K562 (cell line): ENCODE measurements at regions of chr7 and their contacts with region 1.

Region 1: GRCh38 chr7:92447345-92448204 is at the start of gene GATAD1:
- DNase-seq: peak; percentile 96 to 98 (median 97)
- ATAC-seq: peak; percentile 95
- H3K4me3 ChIP-seq: peak within 1 kb of the TSS; percentile 95
- H3K27ac ChIP-seq: peak within 1 kb of the TSS; percentile 95
- H3K4me1 ChIP-seq: peaks cover 5 to 6% of the 10 kb centered on the region in 2 experiments; a peak in 2 of 5 replicates
- H3K27me3 ChIP-seq: no peaks in the 10 kb centered on the region
- CTCF ChIP-seq: peak in 2 of 3 experiments; percentile 95 to 98; a peak in 5 of 6 replicates
- EP300 ChIP-seq: peak; percentile 63
- POLR2A ChIP-seq: peak; percentile 95
- RAD21 ChIP-seq: no peak
- polyA plus RNA-seq, gene GATAD1: 9.3 to 9.4 TPM

Region 2: GRCh38 chr7:91636129-91636724 is 811.3 kb before region 1 on chr7:
- CTCF ChIA-PET with region 1: no interaction called
- POLR2A ChIA-PET with region 1: no interaction called
- in situ Hi-C with region 1: no loop called
- intact Hi-C with region 1: loop called (anchors 10 kb)
- DNase-seq: peak in 2 of 4 experiments; percentile 15 to 71
- ATAC-seq: peak; percentile 90
- H3K4me3 ChIP-seq: no peak overlapping the region
- H3K27ac ChIP-seq: no peak overlapping the region
- H3K4me1 ChIP-seq: no peaks in the 10 kb centered on the region
- H3K27me3 ChIP-seq: peaks cover 0 to 4% of the 10 kb centered on the region in 2 experiments; a peak in 2 of 5 replicates
- CTCF ChIP-seq: peak; percentile 71 to 86 (median 78)
- EP300 ChIP-seq: no peak
- POLR2A ChIP-seq: no peak
- RAD21 ChIP-seq: peak; percentile 91 to 93

Region 3: GRCh38 chr7:92134271-92135051 is 313.1 kb before region 1 on chr7 and contains the start of gene CYP51A1:
- CTCF ChIA-PET with region 1: no interaction called
- POLR2A ChIA-PET with region 1: interaction called, 9 read pairs
- in situ Hi-C with region 1: no loop called
- intact Hi-C with region 1: loop called (anchors 1 kb)
- DNase-seq: peak; percentile 95 to 97 (median 96)
- ATAC-seq: peak; percentile 91
- H3K4me3 ChIP-seq: peak within 1 kb of the TSS; percentile 95
- H3K27ac ChIP-seq: peak within 1 kb of the TSS; percentile 99
- H3K4me1 ChIP-seq: peaks cover 19 to 20% of the 10 kb centered on the region in 2 experiments; a peak in 3 of 5 replicates
- H3K27me3 ChIP-seq: no peaks in the 10 kb centered on the region
- CTCF ChIP-seq: peak in 2 of 3 experiments; percentile 7; a peak in 2 of 6 replicates
- EP300 ChIP-seq: peak; percentile 51; the same call in 1 of the 2 replicates
- POLR2A ChIP-seq: peak; percentile 93
- RAD21 ChIP-seq: no peak; a peak in 2 of 4 replicates
- polyA plus RNA-seq, gene CYP51A1: 41.8 to 42.2 TPM

Region 4: DNA sequence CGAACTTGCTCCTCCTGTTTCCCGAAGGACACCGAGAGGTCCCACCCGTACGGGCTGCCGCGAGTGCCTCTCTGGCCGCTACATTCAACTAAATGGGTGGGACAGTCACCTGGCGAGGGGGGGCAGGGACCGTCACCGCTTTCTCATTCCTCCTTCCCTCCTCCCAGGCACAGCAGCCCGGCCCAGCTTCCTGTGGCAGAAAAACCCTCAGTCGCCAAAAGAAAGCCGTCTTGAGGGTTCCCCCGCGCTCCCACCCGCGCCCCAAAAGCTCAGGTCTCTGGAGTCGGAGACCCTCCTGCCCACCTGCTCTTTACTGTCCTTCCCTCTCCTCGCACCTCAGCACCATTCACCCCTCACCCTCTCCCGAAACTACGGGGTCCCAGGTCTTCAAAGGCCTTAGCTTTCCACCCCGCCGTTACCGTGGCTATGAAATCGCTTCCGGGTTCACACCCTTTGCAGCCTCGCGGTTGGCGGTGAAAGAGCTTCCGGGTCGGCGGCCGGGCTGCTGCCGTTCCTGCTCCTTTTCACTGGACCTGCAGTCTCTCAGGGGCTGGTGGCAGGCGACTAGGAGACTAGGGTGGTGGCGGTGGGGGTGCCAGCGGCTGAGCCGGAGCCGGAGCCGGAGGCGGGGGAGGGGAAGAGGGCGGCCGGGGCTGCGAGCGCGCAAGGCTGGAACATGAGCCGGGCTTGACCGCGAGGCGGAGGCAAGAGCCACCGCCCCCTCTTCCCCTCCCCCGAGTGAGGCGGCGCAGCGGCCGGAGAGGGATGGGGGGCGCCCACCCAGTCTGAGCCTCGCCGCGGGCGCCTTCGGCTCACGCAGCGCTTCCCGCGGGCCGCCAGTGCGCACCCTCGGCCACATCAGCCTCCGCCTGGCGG is 201.8 kb before region 1 on chr7 and contains the starts of genes ANKIB1 and KRIT1:
- CTCF ChIA-PET with region 1: no interaction called
- POLR2A ChIA-PET with region 1: interaction called, 5 read pairs
- in situ Hi-C with region 1: no loop called
- intact Hi-C with region 1: loop called (anchors 5 kb)
- DNase-seq: peak; percentile 90 to 95 (median 94)
- ATAC-seq: peak; percentile 87
- H3K4me3 ChIP-seq: peak within 1 kb of the TSS; percentile 59
- H3K27ac ChIP-seq: peak within 1 kb of the TSS; percentile 92
- H3K4me1 ChIP-seq: peaks cover 0 to 8% of the 10 kb centered on the region in 2 experiments; a peak in 3 of 5 replicates
- H3K27me3 ChIP-seq: no peaks in the 10 kb centered on the region
- CTCF ChIP-seq: peak in 2 of 3 experiments; percentile 15 to 43; a peak in 2 of 6 replicates
- EP300 ChIP-seq: no peak
- POLR2A ChIP-seq: peak; percentile 98
- RAD21 ChIP-seq: peak in 1 of 2 experiments; percentile 14; a peak in 2 of 4 replicates
- polyA plus RNA-seq, gene ANKIB1: 5.9 to 7.4 TPM
- polyA plus RNA-seq, gene KRIT1: 21.5 to 21.7 TPM

Region 5: DNA sequence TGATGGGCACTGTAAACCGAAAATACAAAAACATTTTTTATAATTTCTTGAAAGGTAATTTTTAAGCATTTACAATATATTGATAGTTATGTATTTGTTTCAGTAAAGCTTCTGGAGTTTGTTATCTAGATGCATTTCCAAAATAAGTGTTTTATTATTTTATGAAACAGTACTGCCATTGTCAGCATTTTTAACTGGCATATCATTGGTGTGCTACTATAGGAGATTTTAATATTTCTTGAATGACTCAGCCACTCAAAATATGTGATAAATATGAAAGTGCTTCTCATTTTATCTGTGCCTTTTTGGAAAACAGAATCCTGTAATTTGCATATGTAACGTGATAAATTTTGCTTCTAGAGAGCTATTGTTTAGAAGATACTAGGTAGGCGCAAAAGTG is 103.9 kb before region 1 on chr7:
- CTCF ChIA-PET with region 1: no interaction called
- POLR2A ChIA-PET with region 1: no interaction called
- in situ Hi-C with region 1: no loop called
- intact Hi-C with region 1: no loop called
- DNase-seq: no peak
- ATAC-seq: no peak
- H3K4me3 ChIP-seq: no peak overlapping the region
- H3K27ac ChIP-seq: no peak overlapping the region
- H3K4me1 ChIP-seq: no peaks in the 10 kb centered on the region
- H3K27me3 ChIP-seq: no peaks in the 10 kb centered on the region
- CTCF ChIP-seq: no peak
- EP300 ChIP-seq: no peak
- POLR2A ChIP-seq: no peak
- RAD21 ChIP-seq: no peak

Region 6: GRCh38 chr7:92461027-92462003 is 13.7 kb after region 1 on chr7:
- CTCF ChIA-PET with region 1: no interaction called
- POLR2A ChIA-PET with region 1: interaction called, 15 read pairs
- in situ Hi-C with region 1: no loop called
- intact Hi-C with region 1: no loop called
- DNase-seq: peak; percentile 53 to 75 (median 65)
- ATAC-seq: peak; percentile 93
- H3K4me3 ChIP-seq: no peak overlapping the region
- H3K27ac ChIP-seq: peak overlapping the region; percentile 22; the same call in 2 of the 3 replicates
- H3K4me1 ChIP-seq: peaks cover 0 to 4% of the 10 kb centered on the region in 2 experiments; a peak in 2 of 5 replicates
- H3K27me3 ChIP-seq: no peaks in the 10 kb centered on the region
- CTCF ChIP-seq: peak; percentile 72 to 92 (median 92)
- EP300 ChIP-seq: no peak
- POLR2A ChIP-seq: no peak
- RAD21 ChIP-seq: peak; percentile 48 to 69

Region 7: DNA sequence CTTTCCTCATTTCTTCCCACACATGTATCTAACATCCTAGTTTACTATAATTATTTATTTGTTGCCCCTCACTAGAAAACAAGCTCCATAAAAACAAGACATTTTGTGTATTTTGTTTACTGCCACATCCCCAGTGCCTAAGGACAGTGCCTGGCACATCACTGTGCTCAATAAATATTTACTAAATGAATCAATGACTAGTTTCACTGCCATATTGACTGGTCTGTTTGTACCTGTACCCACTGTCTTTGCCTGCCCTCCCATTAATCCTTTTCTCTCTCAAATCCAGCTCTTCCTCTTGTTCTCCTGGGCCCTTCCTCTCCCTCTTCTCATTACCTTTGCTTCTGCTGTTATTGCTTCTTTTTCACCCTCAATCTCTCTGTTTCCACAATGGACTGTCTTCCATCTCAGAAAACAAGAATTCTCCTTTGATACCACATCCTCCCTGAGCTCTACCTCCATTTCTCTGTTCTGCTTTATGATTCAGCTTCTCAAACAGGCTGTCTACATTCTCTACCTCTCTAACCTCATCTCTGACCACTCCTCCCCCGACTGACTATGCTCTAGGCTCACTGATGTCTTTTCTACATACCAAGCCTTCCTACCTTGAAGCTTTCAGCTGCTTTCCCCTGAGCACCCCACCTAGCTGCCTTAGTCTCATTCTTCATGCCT is 150.9 kb after region 1 on chr7:
- CTCF ChIA-PET with region 1: no interaction called
- POLR2A ChIA-PET with region 1: no interaction called
- in situ Hi-C with region 1: no loop called
- intact Hi-C with region 1: no loop called
- DNase-seq: no peak
- ATAC-seq: no peak
- H3K4me3 ChIP-seq: no peak overlapping the region
- H3K27ac ChIP-seq: no peak overlapping the region
- H3K4me1 ChIP-seq: no peaks in the 10 kb centered on the region
- H3K27me3 ChIP-seq: peaks cover 0 to 4% of the 10 kb centered on the region in 2 experiments; a peak in 1 of 5 replicates
- CTCF ChIP-seq: no peak
- EP300 ChIP-seq: no peak
- POLR2A ChIP-seq: no peak
- RAD21 ChIP-seq: no peak